OCI-LY7 (cell line): ENCODE measurements at regions of chr9 and their contacts with region 1.

Region 1: GRCh38 chr9:112717661-112718341 is at the start of gene INIP:
- DNase-seq: peak; percentile 99
- H3K4me3 ChIP-seq: peak within 1 kb of the TSS; percentile 86
- H3K27ac ChIP-seq: peak within 1 kb of the TSS; percentile 83
- H3K4me1 ChIP-seq: peaks cover 16% of the 10 kb centered on the region
- CTCF ChIP-seq: peak; percentile 59
- total RNA-seq, gene INIP: 23.2 and 27.0 TPM in 2 replicates

Region 2: GRCh38 chr9:112379177-112380101 is 338.4 kb before region 1 on chr9:
- CTCF ChIA-PET with region 1: interaction called, 5 read pairs
- POLR2A ChIA-PET with region 1: interaction called, 4 read pairs
- intact Hi-C with region 1: loop called (anchors 5 kb)
- DNase-seq: peak; percentile 97
- H3K4me3 ChIP-seq: peak overlapping the region; percentile 90
- H3K27ac ChIP-seq: peak overlapping the region; percentile 51
- H3K4me1 ChIP-seq: peaks cover 42% of the 10 kb centered on the region
- CTCF ChIP-seq: no peak

Region 3: GRCh38 chr9:112486221-112487007 is 231.4 kb before region 1 on chr9 and contains the start of gene KIAA1958:
- CTCF ChIA-PET with region 1: interaction called, 4 read pairs
- POLR2A ChIA-PET with region 1: interaction called, 4 read pairs
- intact Hi-C with region 1: loop called (anchors 5 kb)
- DNase-seq: peak; percentile 93
- H3K4me3 ChIP-seq: peak within 1 kb of the TSS; percentile 84
- H3K27ac ChIP-seq: peak within 1 kb of the TSS; percentile 66
- H3K4me1 ChIP-seq: peaks cover 27% of the 10 kb centered on the region
- CTCF ChIP-seq: no peak
- total RNA-seq, gene KIAA1958: 13.4 and 15.4 TPM in 2 replicates

Region 4: DNA sequence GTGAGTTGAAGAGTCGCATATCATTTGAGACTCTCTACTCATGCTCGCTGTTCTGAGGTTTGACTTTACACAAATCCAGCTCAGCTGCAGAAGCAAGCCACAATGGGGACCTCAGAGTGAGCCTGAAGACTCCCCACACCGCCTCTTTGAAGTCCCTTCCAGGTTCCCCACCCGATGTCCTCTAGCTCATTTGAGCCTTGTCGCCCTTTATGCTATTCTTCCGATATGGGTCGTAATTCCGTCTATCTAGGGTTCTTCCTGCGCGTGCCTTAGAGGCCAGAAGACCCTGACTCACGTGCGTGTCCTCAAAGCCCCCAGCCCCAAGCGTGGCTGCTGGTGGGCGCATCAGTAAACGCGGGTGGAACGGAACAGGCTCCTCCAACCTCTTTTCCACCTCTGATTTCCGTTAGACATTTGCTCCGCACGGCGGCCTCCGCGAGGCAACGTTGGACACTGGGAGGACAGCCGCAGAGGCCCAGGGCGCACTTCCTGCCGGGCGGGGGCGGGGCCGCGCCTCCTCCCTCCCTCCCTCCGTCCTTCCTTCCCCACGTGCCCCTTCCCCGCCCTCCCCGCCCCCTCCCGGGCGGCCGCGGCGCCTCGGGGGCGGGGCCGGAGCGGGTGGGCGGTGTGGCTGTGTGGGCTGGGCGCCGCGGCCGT is 32.4 kb after region 1 on chr9 and contains the start of gene SNX30:
- CTCF ChIA-PET with region 1: no interaction called
- POLR2A ChIA-PET with region 1: interaction called, 17 read pairs
- intact Hi-C with region 1: loop called (anchors 1 kb)
- DNase-seq: peak; percentile 86
- H3K4me3 ChIP-seq: peak within 1 kb of the TSS; percentile 99
- H3K27ac ChIP-seq: peak within 1 kb of the TSS; percentile 29
- H3K4me1 ChIP-seq: peaks cover 35% of the 10 kb centered on the region
- CTCF ChIP-seq: no peak
- total RNA-seq, gene SNX30: 14.2 and 19.8 TPM in 2 replicates